Cardiac septum (tissue), 1 donor: ENCODE measurements at regions of chr2 and their contacts with region 1.

Region 1: DNA sequence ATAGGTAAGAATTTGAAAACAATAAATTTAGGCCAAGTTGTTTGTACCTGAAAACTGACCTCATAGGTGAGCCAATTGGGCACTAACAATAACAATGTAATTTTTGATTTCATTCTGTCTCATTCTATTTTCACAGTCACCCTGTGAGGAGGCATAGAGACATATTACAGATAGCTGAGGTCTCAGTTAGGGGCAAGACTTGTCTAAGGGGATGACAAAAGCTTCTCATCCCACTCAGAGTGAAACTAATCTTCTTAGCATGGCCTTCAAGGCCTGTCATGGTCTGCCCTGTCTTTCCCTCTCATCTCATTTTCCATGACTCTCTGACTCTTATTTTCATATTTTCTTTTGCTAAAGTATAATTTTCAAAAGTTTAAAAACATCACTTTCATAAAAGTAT is 562.0 kb upstream of the TNP1 start:
- DNase-seq: no peak

Region 2: GRCh38 chr2:217248312-217248935 is 173.4 kb before region 1 on chr2:
- intact Hi-C with region 1: loop called (anchors 5 kb)
- DNase-seq: peak; percentile 81

Region 3: DNA sequence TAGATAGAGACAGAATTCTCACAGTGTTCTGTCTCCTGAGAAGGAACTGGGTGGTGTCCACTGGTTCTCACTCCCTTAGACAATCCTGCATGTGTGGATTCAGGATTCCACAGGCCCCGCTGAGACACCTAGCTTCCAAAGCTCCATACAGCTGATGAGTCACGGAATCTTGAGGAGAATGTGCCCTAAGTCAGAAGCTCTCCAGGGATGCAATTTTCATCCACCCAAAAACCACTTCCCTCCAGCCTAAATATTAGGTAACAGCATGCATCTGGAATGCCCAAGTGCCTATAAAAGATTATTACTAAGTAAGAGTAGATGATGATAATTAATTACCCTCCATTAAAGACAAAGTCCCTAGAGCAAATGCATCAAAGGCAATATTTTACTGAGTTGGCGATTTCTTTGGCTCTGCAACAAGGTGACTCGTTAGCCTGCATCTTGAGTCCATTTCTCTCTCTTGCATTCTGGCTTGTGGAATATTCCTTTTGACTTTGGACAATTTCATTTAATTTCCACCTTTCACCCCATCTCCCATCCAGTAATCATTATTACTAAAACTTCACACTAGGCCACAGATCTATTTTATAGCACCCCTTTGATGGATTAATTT is 105.9 kb after region 1 on chr2:
- intact Hi-C with region 1: no loop called
- DNase-seq: no peak